Activated T-helper 1 cell treated with anti-CD3 and anti-CD28 coated beads, Interleukin-12 subunit alpha, Interleukin-12 subunit beta, Interleukin-2, Interleukin-4 antibody, amounts not matched to agents 30 ng/mL and 10 ng/mL and 1 ng/mL, durations not matched to agents 14 hours and 24 hours and 36 hours (primary cell): ENCODE measurements at regions of chr6 and their contacts with region 1.

Region 1: DNA sequence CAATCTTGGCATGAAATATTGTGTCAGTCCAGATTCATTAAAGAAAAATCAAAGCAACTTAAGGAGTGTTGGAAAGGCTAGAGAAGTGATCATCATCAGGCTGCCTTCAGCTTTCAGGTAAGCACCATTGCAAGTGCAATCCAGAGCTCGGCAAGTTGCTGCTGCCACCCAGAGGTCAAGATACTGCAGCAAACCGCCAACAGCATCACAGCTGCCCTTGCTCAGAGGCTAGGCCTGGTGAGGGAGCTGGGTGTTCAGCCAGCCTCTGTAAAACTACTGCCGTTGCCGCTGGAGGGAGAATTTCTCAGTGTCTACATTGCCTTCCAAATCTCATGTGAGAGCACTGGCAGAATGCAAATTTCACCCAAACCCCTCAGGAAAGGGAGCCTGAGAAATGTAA is 5.8 kb upstream of the SYNE1 start:
- DNase-seq: no peak
- H3K4me3 Mint-ChIP-seq: no peak overlapping the region
- H3K27ac Mint-ChIP-seq: no peak overlapping the region
- H3K4me1 Mint-ChIP-seq: no peaks in the 10 kb centered on the region
- H3K27me3 Mint-ChIP-seq: peaks cover 13% of the 10 kb centered on the region

Region 2: GRCh38 chr6:152484806-152485205 is 158.2 kb before region 1 on chr6:
- intact Hi-C with region 1: loop called (anchors 10 kb)
- DNase-seq: no peak
- H3K4me3 Mint-ChIP-seq: no peak overlapping the region
- H3K27ac Mint-ChIP-seq: no peak overlapping the region
- H3K4me1 Mint-ChIP-seq: no peaks in the 10 kb centered on the region
- H3K27me3 Mint-ChIP-seq: peaks cover 2% of the 10 kb centered on the region

Region 3: GRCh38 chr6:152552616-152553209 is 90.3 kb before region 1 on chr6:
- intact Hi-C with region 1: loop called (anchors 2 kb)
- DNase-seq: no peak
- H3K4me3 Mint-ChIP-seq: no peak overlapping the region
- H3K27ac Mint-ChIP-seq: no peak overlapping the region
- H3K4me1 Mint-ChIP-seq: no peaks in the 10 kb centered on the region
- H3K27me3 Mint-ChIP-seq: no peaks in the 10 kb centered on the region

Region 4: DNA sequence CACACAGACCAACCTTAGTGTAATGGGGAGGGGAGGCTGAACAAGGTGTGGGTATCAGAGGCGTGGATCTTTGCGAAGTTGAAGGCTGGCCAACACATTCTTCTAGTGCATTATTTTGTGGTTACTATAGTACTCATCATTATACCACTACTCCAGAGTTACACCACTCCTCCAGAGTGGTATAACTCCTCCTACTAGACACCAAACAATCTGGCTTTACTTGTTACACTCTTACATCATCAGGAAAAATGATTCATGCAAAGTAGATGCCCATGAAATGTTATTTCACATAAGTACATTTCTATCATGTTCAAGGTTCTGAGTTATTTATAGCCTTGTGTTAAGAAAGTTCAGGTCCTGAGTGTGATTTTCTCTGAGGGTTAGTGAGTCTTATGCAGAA is 952.9 kb after region 1 on chr6:
- intact Hi-C with region 1: no loop called
- DNase-seq: no peak
- H3K4me3 Mint-ChIP-seq: no peak overlapping the region
- H3K27ac Mint-ChIP-seq: no peak overlapping the region
- H3K4me1 Mint-ChIP-seq: peaks cover 5% of the 10 kb centered on the region
- H3K27me3 Mint-ChIP-seq: peaks cover 3% of the 10 kb centered on the region